Endothelial cell of umbilical vein (primary cell): ENCODE measurements at regions of chr14 and their contacts with region 1.

Region 1: DNA sequence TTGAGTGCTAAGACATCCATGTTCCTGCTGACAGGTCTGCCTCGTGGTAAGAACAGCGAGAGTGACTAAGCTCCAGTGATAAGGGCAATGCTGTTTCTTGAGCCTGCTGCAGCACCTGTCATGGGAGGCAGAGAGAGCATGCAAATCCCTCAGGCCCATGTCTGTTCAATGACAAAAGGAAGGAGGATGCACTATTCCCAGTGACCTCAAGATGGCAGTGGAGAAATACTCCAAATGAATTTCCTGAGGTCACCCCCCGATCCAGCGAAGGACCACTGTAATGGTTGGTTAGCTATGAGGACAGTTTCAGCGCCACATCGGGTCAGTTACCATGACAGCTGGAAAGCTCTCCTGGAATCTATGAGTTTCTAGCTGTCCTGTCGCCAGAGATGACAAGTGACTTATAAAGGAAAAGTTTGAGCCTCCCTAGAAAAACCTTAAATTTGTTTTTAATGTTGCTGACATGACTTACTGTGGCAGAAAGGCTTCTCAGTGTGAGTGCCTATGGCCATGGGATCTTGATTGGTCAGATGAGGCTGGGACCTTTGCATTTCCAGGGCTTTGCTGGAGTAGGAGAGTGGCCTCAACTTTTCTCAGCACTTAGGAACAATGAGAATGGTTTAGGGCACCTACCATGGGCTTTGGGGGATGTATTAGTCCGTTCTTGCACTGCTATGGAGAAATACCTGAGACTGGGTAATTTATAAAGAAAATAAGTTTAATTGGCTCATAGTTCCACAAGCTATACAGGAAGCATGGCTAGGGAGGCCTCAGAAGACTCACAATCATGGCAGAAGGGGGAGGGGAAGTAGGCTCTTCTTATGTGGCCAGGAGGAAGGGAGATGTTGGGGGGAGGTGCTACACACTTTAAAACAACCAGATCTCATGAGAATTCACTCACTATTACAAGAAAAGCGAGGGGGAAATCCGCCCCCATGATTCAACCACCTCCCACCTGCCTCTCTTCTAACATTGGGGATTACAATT is 88.0 kb upstream of the TMEM260 start:
- DNase-seq: peak; percentile 68
- H3K4me3 ChIP-seq: no peak overlapping the region
- H3K27ac ChIP-seq: no peak overlapping the region
- H3K4me1 ChIP-seq: no peaks in the 10 kb centered on the region
- H3K27me3 ChIP-seq: peaks cover 2 to 6% of the 10 kb centered on the region in 2 experiments
- CTCF ChIP-seq: peak; percentile 61 to 64
- POLR2A ChIP-seq: no peak

Region 2: DNA sequence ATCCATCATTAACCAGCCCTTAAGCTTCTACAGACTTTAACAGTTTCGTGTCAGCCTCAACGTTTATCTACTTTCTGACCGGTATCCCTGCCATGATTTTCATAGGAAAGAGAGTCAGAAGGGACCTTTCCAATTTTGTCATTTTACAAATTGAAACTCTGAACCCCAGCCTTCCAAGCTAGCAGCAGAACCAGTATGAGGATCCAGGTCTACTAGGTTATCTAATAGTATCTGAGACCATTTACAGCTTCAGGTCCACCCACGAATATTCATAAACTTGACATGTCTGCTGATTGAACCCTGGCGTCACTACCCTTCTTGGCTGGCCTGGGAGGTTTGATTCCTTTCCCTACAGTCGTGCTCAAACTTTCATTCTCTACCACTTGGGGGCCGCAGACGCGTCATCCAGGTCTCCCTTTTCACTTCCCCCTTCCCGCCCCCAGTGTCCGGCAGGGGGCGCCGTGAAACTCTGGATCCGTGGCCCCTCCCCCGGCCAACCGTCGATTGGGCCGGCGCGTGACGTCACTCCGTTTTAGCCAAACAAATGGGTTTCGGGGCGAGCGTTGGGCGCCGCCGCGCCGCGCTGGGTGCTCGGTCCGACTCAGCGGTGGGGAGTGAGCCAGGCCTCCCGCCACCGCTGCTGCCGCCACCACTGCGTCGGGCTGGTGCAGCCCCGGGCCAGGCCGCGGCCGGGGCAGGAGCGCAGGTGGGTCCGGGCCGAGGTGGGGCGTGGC is 1220.6 kb before region 1 on chr14 and contains the start of gene FBXO34:
- CTCF ChIA-PET with region 1: interaction called, 3 read pairs
- POLR2A ChIA-PET with region 1: no interaction called
- dilution Hi-C with region 1: no loop called
- intact Hi-C with region 1: loop called (anchors 1 kb)
- DNase-seq: peak; percentile 98
- H3K4me3 ChIP-seq: peak within 1 kb of the TSS; percentile 85 to 99 (median 98)
- H3K27ac ChIP-seq: peak within 1 kb of the TSS; percentile 88
- H3K4me1 ChIP-seq: peaks cover 25% of the 10 kb centered on the region
- H3K27me3 ChIP-seq: no peaks in the 10 kb centered on the region
- CTCF ChIP-seq: peak; percentile 98 to 100
- POLR2A ChIP-seq: peak; percentile 71
- total RNA-seq, gene FBXO34: 14.2 and 16.5 TPM in 2 replicates

Region 3: GRCh38 chr14:56659964-56660551 is 168.5 kb after region 1 on chr14:
- CTCF ChIA-PET with region 1: no interaction called
- POLR2A ChIA-PET with region 1: no interaction called
- dilution Hi-C with region 1: no loop called
- intact Hi-C with region 1: loop called (anchors 2 kb)
- DNase-seq: peak; percentile 61
- H3K4me3 ChIP-seq: no peak overlapping the region
- H3K27ac ChIP-seq: no peak overlapping the region
- H3K4me1 ChIP-seq: no peaks in the 10 kb centered on the region
- H3K27me3 ChIP-seq: no peaks in the 10 kb centered on the region
- CTCF ChIP-seq: peak; percentile 50 to 64
- POLR2A ChIP-seq: no peak

Region 4: GRCh38 chr14:57182760-57183503 is 691.3 kb after region 1 on chr14:
- CTCF ChIA-PET with region 1: interaction called, 23 read pairs
- POLR2A ChIA-PET with region 1: no interaction called
- dilution Hi-C with region 1: no loop called
- intact Hi-C with region 1: loop called (anchors 2 kb)
- DNase-seq: no peak
- H3K4me3 ChIP-seq: no peak overlapping the region
- H3K27ac ChIP-seq: no peak overlapping the region
- H3K4me1 ChIP-seq: no peaks in the 10 kb centered on the region
- H3K27me3 ChIP-seq: peaks cover 17 to 18% of the 10 kb centered on the region in 2 experiments
- CTCF ChIP-seq: peak in 1 of 2 donors; percentile 5
- POLR2A ChIP-seq: no peak

Region 5: GRCh38 chr14:57317316-57317715 is 825.7 kb after region 1 on chr14:
- CTCF ChIA-PET with region 1: interaction called, 115 read pairs
- POLR2A ChIA-PET with region 1: no interaction called
- dilution Hi-C with region 1: no loop called
- intact Hi-C with region 1: loop called (anchors 1 kb)
- DNase-seq: peak; percentile 82
- H3K4me3 ChIP-seq: no peak overlapping the region
- H3K27ac ChIP-seq: no peak overlapping the region
- H3K4me1 ChIP-seq: no peaks in the 10 kb centered on the region
- H3K27me3 ChIP-seq: peaks cover 11 to 12% of the 10 kb centered on the region in 2 experiments
- CTCF ChIP-seq: peak; percentile 70 to 83
- POLR2A ChIP-seq: no peak

Region 6: GRCh38 chr14:57871459-57872080 is 1380.0 kb after region 1 on chr14:
- CTCF ChIA-PET with region 1: no interaction called
- POLR2A ChIA-PET with region 1: no interaction called
- dilution Hi-C with region 1: no loop called
- intact Hi-C with region 1: loop called (anchors 5 kb)
- DNase-seq: peak; percentile 26
- H3K4me3 ChIP-seq: no peak overlapping the region
- H3K27ac ChIP-seq: no peak overlapping the region
- H3K4me1 ChIP-seq: no peaks in the 10 kb centered on the region
- H3K27me3 ChIP-seq: peaks cover 2% of the 10 kb centered on the region in 2 experiments
- CTCF ChIP-seq: peak; percentile 45 to 59
- POLR2A ChIP-seq: no peak